CD8-positive, alpha-beta T cell (primary cell): ENCODE measurements at regions of chr5 and their contacts with region 1.

Region 1: DNA sequence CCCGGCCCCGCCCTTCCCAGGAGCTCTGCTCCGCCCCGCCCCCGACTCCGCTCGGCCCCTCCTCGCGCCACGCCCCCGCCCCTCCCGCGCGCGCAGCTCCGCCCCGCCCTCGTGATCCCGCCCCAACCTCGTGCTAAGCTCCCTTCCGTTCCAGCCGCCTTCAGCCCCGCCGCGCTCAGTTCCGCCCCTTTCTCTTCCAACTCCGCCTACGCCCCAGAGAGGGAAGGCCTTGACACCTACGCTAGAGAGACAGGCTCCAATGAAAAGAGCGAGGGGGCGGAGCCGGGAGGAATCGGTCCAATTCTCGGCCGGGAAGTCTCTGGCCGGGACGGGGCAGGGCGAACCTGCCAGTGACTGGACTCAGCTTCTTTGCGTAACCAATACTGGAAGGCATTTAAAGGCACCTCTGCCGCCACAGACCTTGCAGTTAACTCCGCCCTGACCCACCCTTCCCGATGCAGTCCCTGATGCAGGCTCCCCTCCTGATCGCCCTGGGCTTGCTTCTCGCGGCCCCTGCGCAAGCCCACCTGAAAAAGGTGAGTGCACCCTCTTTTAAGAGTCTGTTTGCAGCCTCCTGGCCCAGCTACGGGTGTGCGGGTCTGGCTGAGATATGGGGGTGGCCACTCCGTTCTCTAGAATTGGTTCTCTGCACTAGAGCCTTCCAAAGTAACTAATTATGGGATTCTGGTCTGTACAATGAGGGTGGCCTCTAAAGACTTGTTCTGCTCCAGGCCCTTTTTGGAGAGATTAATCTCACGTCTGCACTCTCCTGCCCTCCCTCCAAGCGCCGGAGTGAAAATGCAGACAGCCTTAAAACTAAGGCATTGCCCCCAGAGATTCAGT is at the start of gene GM2A:
- DNase-seq: peak; percentile 95 to 99 (median 98)
- ATAC-seq: peak; percentile 97
- H3K4me3 ChIP-seq: peak within 1 kb of the TSS; percentile 81 to 82
- H3K4me3 Mint-ChIP-seq: peak within 1 kb of the TSS; percentile 92
- H3K27ac ChIP-seq: peak within 1 kb of the TSS; percentile 57 to 77
- H3K27ac Mint-ChIP-seq: peak within 1 kb of the TSS; percentile 93
- H3K4me1 ChIP-seq: peaks cover 25% of the 10 kb centered on the region
- H3K4me1 Mint-ChIP-seq: peaks cover 45% of the 10 kb centered on the region
- H3K27me3 ChIP-seq: no peaks in the 10 kb centered on the region
- H3K27me3 Mint-ChIP-seq: no peaks in the 10 kb centered on the region
- CTCF ChIP-seq: no peak
- total RNA-seq, gene GM2A: 3.4 to 5.0 TPM

Region 2: GRCh38 chr5:150000256-150000989 is 1252.6 kb before region 1 on chr5 and contains the starts of genes HMGXB3 and TIGD6:
- CTCF ChIA-PET with region 1: no interaction called
- POLR2A ChIA-PET with region 1: no interaction called
- intact Hi-C with region 1: loop called in 1 of 2 experiments (anchors 2 kb)
- DNase-seq: peak; percentile 67 to 92 (median 83)
- ATAC-seq: peak; percentile 84
- H3K4me3 ChIP-seq: peak within 1 kb of the TSS; percentile 73 to 79
- H3K4me3 Mint-ChIP-seq: peak within 1 kb of the TSS; percentile 89
- H3K27ac ChIP-seq: peak within 1 kb of the TSS; percentile 75 to 80
- H3K27ac Mint-ChIP-seq: peak within 1 kb of the TSS; percentile 91
- H3K4me1 ChIP-seq: peaks cover 22% of the 10 kb centered on the region
- H3K4me1 Mint-ChIP-seq: peaks cover 39% of the 10 kb centered on the region
- H3K27me3 ChIP-seq: no peaks in the 10 kb centered on the region
- H3K27me3 Mint-ChIP-seq: no peaks in the 10 kb centered on the region
- CTCF ChIP-seq: no peak
- total RNA-seq, gene HMGXB3: 27.4 to 29.7 TPM
- total RNA-seq, gene TIGD6: 0.97 to 1.5 TPM

Region 3: GRCh38 chr5:150458819-150459557 is 794.0 kb before region 1 on chr5:
- CTCF ChIA-PET with region 1: no interaction called
- POLR2A ChIA-PET with region 1: no interaction called
- intact Hi-C with region 1: loop called in 1 of 2 experiments (anchors 5 kb)
- DNase-seq: peak; percentile 73 to 93 (median 84)
- ATAC-seq: peak; percentile 93
- H3K4me3 ChIP-seq: no peak overlapping the region
- H3K4me3 Mint-ChIP-seq: peak overlapping the region; percentile 51
- H3K27ac ChIP-seq: peak overlapping the region; percentile 13 to 31
- H3K27ac Mint-ChIP-seq: peak overlapping the region; percentile 67
- H3K4me1 ChIP-seq: peaks cover 20% of the 10 kb centered on the region
- H3K4me1 Mint-ChIP-seq: peaks cover 37% of the 10 kb centered on the region
- H3K27me3 ChIP-seq: no peaks in the 10 kb centered on the region
- H3K27me3 Mint-ChIP-seq: no peaks in the 10 kb centered on the region
- CTCF ChIP-seq: peak; percentile 68

Region 4: GRCh38 chr5:150758531-150759333 is 494.3 kb before region 1 on chr5 and contains the start of gene DCTN4:
- CTCF ChIA-PET with region 1: no interaction called
- POLR2A ChIA-PET with region 1: no interaction called
- intact Hi-C with region 1: loop called in 1 of 2 experiments (anchors 10 kb)
- DNase-seq: peak; percentile 83 to 99 (median 93)
- ATAC-seq: peak; percentile 93
- H3K4me3 ChIP-seq: peak within 1 kb of the TSS; percentile 79 to 92
- H3K4me3 Mint-ChIP-seq: no peak within 1 kb of the TSS
- H3K27ac ChIP-seq: peak within 1 kb of the TSS; percentile 89 to 100
- H3K27ac Mint-ChIP-seq: no peak within 1 kb of the TSS
- H3K4me1 ChIP-seq: peaks cover 27% of the 10 kb centered on the region
- H3K4me1 Mint-ChIP-seq: peaks cover 39% of the 10 kb centered on the region
- H3K27me3 ChIP-seq: no peaks in the 10 kb centered on the region
- H3K27me3 Mint-ChIP-seq: peaks cover 2% of the 10 kb centered on the region
- CTCF ChIP-seq: no peak
- total RNA-seq, gene DCTN4: 117 to 121 TPM

Region 5: DNA sequence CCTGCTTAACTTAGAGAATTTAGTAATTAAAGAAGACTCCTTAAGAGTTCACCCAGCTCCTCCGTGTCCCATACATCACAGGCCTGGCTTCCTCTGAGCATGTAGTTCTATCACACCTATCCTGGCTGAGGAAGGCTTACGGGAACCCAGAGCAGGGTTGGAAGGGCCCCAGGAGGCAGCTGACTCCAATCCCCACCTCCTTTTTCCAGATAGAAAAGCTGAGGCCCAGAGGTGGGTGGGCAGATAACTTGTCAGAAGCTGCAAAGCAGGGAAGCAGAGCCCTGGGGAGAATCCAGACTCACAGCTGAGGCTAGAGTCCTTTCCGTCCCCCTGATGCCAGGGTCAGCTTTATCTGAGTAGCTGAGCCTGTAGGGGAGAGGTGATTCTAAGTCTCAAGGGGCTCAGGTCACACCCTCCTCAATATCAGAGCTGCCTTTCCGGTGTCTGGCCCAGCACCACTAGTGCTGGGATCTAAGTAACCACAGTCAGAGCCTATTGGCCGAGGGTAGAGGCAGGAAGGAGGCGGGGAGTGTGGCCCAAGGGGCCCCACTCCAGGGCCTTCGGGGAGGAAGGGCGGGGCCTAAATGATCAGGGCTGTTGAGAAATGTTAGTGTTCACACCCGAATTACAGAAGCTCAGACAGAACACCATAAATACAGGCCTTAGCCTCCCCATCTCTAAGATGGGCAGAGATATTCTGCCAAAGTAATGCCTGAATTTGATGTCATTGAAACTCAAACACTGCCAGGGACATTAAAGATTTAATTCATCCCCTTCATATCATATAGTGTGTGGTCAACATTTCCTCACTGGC is 39.0 kb before region 1 on chr5:
- CTCF ChIA-PET with region 1: interaction called, 7 read pairs
- POLR2A ChIA-PET with region 1: interaction called, 15 read pairs
- intact Hi-C with region 1: loop called (anchors 2 to 5 kb)
- DNase-seq: peak; percentile 67 to 95 (median 89)
- ATAC-seq: peak; percentile 80
- H3K4me3 ChIP-seq: peak overlapping the region; percentile 57 to 61
- H3K4me3 Mint-ChIP-seq: peak overlapping the region; percentile 83
- H3K27ac ChIP-seq: peak overlapping the region; percentile 70 to 86
- H3K27ac Mint-ChIP-seq: peak overlapping the region; percentile 96
- H3K4me1 ChIP-seq: peaks cover 91% of the 10 kb centered on the region
- H3K4me1 Mint-ChIP-seq: peaks cover 86% of the 10 kb centered on the region
- H3K27me3 ChIP-seq: no peaks in the 10 kb centered on the region
- H3K27me3 Mint-ChIP-seq: no peaks in the 10 kb centered on the region
- CTCF ChIP-seq: no peak

Region 6: GRCh38 chr5:151447174-151448037 is 194.4 kb after region 1 on chr5 and contains the start of gene SLC36A1:
- CTCF ChIA-PET with region 1: no interaction called
- POLR2A ChIA-PET with region 1: no interaction called
- intact Hi-C with region 1: loop called (anchors 5 to 10 kb)
- DNase-seq: peak; percentile 80 to 94 (median 91)
- ATAC-seq: peak; percentile 98
- H3K4me3 ChIP-seq: peak within 1 kb of the TSS; percentile 83 to 89
- H3K4me3 Mint-ChIP-seq: peak within 1 kb of the TSS; percentile 94
- H3K27ac ChIP-seq: peak within 1 kb of the TSS; percentile 55 to 68
- H3K27ac Mint-ChIP-seq: peak within 1 kb of the TSS; percentile 89
- H3K4me1 ChIP-seq: peaks cover 8% of the 10 kb centered on the region
- H3K4me1 Mint-ChIP-seq: peaks cover 24% of the 10 kb centered on the region
- H3K27me3 ChIP-seq: peaks cover 0 to 5% of the 10 kb centered on the region in 2 experiments
- H3K27me3 Mint-ChIP-seq: peaks cover 19% of the 10 kb centered on the region
- CTCF ChIP-seq: peak; percentile 96
- total RNA-seq, gene SLC36A1: 1.5 to 2.4 TPM